Naive thymus-derived CD4-positive, alpha-beta T cell (primary cell): ENCODE measurements at regions of chr9 and their contacts with region 1.

Region 1: DNA sequence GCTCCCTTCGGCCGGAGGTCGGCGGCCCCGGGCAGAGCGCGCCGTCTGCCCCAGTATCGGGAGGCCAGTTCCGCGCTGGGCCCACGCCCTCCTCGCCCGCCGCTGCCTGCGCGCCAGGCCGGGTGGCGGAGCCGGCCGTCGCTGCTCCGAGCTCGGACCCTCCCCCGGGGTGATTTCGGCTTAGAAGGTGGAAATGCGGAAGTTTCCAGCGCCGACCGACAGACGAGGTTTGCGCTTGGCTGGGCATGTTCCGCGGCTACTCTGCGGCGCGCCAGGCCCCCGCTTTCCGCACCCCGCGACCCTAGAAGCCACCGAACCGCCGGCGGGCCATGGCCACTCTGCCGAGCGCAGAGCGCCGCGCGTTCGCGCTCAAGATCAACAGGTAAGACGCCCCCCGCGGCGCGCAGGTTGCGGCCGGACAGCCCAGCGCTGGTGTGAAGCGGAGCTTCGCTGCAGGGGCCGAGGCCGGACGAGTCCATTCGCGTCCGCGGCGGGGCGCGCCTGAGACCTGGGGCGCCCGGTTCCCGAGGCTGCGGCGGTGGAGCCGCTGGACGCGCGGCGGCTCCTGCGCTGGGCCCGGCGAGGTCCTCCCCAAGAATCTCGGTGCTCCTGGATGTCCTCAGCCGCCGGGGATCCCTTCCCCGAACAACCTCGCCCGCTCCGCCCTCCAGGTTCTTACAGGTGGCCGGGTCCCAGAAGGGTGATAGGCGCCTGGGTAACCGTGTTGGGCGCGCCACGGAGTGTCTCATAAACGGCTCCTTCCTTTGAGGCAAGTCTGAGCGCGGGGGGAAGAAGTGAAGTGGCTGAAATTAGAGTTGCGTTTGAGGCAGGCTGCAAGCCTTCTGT is at the start of gene DOCK8:
- DNase-seq: peak; percentile 27 to 77 (median 37)
- ATAC-seq: peak; percentile 85
- H3K4me3 ChIP-seq: peak within 1 kb of the TSS; percentile 56
- H3K4me3 Mint-ChIP-seq: peak within 1 kb of the TSS; percentile 81 to 92 (median 86)
- H3K27ac ChIP-seq: no peak within 1 kb of the TSS
- H3K27ac Mint-ChIP-seq: peak within 1 kb of the TSS in 5 of 9 donors; percentile 11 to 85 (median 74)
- H3K4me1 ChIP-seq: peaks cover 0 to 6% of the 10 kb centered on the region in 2 donors
- H3K4me1 Mint-ChIP-seq: peaks cover 0 to 24% (median 7%) of the 10 kb centered on the region in 7 donors
- H3K27me3 ChIP-seq: no peaks in the 10 kb centered on the region
- H3K27me3 Mint-ChIP-seq: peaks cover 9 to 19% (median 12%) of the 10 kb centered on the region in 5 donors
- total RNA-seq, gene DOCK8: 162 to 294 (median 280) TPM

Region 2: GRCh38 chr9:306887-307286 is 92.0 kb after region 1 on chr9:
- CTCF ChIA-PET with region 1: interaction called, 3 read pairs
- POLR2A ChIA-PET with region 1: no interaction called
- intact Hi-C with region 1: loop called (anchors 1 kb)
- DNase-seq: peak; percentile 12 to 65 (median 52)
- ATAC-seq: peak; percentile 94
- H3K4me3 ChIP-seq: no peak overlapping the region
- H3K4me3 Mint-ChIP-seq: no peak overlapping the region
- H3K27ac ChIP-seq: no peak overlapping the region
- H3K27ac Mint-ChIP-seq: peak overlapping the region in 6 of 9 donors; percentile 3 to 69 (median 43)
- H3K4me1 ChIP-seq: no peaks in the 10 kb centered on the region
- H3K4me1 Mint-ChIP-seq: peaks cover 0 to 16% (median 7%) of the 10 kb centered on the region in 7 donors
- H3K27me3 ChIP-seq: no peaks in the 10 kb centered on the region
- H3K27me3 Mint-ChIP-seq: no peaks in the 10 kb centered on the region